Activated B cell treated with CpG ODN at 0.5 μM for 24 hours (primary cell): ENCODE measurements at regions of chrX and their contacts with region 1.

Region 1: DNA sequence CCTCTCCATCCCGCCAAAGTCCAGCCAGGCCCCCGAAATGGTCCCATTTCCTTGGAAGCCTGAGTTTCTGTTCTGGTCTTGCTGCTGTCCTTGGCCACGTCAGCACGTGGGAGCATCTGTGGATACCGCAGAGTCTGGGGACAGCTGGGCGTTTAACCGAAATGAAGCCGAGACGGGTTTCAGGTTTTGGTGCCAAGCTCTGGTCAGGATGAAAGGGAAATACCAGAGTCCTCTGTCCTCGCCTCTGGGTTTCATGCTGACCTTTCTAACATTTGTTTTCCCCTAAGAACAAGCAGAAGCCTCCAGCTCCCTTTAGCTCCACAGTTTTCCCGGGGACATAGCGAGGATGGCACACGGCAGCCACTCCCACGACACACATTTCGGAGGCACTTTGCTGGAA is 19.7 kb downstream of the SHOX start:
- DNase-seq: no peak
- ATAC-seq: no peak
- H3K4me3 Mint-ChIP-seq: no peak overlapping the region
- H3K27ac Mint-ChIP-seq: no peak overlapping the region
- H3K4me1 Mint-ChIP-seq: no peaks in the 10 kb centered on the region
- H3K27me3 Mint-ChIP-seq: no peaks in the 10 kb centered on the region
- CTCF ChIP-seq: no peak

Region 2: DNA sequence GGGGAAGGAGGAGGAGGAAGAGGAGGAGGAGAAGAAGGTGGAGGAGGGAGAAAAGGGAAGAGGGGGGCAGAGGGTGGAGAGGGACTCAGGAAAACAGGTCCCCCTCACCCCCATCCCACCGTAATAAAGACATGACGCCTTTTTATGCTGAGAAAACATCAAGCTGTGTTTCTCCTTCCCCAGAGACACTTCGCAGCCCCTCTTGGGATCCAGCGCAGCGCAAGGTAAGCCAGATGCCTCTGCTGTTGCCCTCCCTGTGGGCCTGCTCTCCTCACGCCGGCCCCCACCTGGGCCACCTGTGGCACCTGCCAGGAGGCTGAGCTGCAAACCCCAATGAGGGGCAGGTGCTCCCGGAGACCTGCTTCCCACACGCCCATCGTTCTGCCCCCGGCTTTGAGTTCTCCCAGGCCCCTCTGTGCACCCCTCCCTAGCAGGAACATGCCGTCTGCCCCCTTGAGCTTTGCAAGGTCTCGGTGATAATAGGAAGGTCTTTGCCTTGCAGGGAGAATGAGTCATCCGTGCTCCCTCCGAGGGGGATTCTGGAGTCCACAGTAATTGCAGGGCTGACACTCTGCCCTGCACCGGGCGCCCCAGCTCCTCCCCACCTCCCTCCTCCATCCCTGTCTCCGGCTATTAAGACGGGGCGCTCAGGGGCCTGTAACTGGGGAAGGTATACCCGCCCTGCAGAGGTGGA is 65.1 kb before region 1 on chrX:
- CTCF ChIA-PET with region 1: no interaction called
- POLR2A ChIA-PET with region 1: no interaction called
- intact Hi-C with region 1: loop called (anchors 5 kb)
- DNase-seq: no peak
- ATAC-seq: no peak
- H3K4me3 Mint-ChIP-seq: no peak overlapping the region
- H3K27ac Mint-ChIP-seq: no peak overlapping the region
- H3K4me1 Mint-ChIP-seq: no peaks in the 10 kb centered on the region
- H3K27me3 Mint-ChIP-seq: no peaks in the 10 kb centered on the region
- CTCF ChIP-seq: no peak